Prostate gland (tissue), 2 donors: ENCODE measurements at regions of chr10 and their contacts with region 1.

Region 1: DNA sequence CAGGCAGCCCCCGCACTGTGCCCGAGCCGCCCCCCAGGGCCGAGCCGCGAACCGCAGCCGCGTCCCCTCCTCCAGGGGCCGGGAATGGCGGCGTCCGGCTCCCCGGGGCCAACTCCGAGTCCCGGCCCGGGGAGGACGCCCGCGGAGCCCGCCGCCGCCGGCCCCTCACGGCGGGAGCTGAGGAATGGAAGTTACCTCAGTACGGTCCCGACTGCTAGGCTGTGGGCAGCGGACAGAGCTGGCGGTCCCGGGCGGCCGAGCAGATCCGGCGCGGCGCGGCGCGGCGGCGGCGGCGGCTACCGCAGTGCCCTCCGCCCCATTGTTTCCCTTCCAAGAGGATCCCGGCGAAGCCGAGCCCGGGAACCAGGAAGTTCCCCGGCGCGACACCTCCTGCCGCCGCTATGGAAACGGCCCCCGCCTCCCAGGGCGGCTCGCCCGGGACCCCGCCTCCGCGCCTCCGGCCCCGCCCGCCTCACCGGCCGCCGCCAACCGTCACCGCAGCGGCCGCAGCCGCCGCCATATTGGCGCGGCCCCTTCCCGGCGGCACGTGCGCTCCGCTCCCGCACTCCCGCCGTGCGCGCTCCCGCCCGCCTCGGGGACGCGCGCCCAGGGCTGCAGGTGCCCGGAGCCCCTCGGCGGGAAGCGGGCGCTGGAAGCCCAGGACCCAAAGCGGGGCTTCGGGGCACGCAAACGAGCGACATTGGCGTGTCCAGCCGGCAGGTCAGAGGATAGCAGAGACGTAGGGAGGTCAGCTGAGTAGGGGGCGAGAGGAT is at the start of gene USP6NL:
- DNase-seq: peak; percentile 93
- H3K4me3 ChIP-seq: peak within 1 kb of the TSS; percentile 94 to 95
- H3K27ac ChIP-seq: peak within 1 kb of the TSS; percentile 83 to 90
- H3K4me1 ChIP-seq: no peaks in the 10 kb centered on the region
- H3K27me3 ChIP-seq: no peaks in the 10 kb centered on the region
- CTCF ChIP-seq: no peak
- POLR2A ChIP-seq: peak; percentile 90
- total RNA-seq, gene USP6NL: 13.9 to 28.4 TPM

Region 2: DNA sequence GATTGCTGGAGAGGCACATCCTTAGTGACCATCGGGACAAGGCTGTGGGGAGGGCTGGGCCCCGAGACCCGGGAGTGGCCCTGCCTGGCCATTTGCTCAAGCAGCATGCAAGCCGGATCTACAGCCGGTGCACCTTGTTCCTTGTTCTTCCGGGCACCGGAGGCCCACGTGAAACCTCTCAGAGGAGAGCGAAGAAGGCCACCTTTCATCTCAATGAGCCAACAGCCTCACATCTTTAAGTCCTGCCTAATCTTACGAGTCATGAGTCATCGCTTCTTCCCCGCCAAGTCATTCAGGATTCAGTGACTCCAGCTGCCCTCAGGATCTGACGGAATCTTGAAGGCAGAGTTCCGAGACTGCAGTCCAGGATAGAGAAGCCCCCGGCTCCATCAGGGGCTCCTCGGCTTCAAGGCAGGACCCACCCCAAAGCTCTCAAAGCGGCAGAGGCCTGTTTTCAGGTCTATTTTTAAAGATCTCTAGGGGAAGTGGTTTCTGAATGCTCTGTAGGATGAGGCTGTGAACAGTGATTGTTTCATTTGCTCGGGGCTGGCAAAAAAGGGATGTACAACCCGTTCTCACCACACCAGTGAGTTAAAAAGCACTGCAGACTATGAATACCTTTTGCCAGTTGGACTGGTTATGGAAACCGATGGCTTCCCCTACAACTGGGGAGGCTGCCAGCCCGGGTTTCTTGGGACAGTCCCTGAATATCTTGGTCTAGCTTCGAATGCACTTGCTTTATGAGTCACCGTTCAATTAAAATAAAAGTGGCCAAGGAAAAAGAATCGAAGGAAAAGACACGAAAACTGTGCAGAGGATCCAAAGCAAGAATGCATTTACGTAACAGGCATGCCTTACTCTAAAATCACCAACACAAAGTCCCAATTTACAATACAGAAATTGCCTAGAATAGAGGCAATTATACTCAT is 73.5 kb after region 1 on chr10:
- intact Hi-C with region 1: loop called (anchors 5 kb)
- DNase-seq: peak; percentile 88
- H3K4me3 ChIP-seq: no peak overlapping the region
- H3K27ac ChIP-seq: peak overlapping the region; percentile 71 to 74
- H3K4me1 ChIP-seq: peaks cover 7% of the 10 kb centered on the region
- H3K27me3 ChIP-seq: no peaks in the 10 kb centered on the region
- CTCF ChIP-seq: no peak
- POLR2A ChIP-seq: no peak

Region 3: GRCh38 chr10:11698691-11699549 is 87.5 kb after region 1 on chr10:
- intact Hi-C with region 1: no loop called
- DNase-seq: no peak
- H3K4me3 ChIP-seq: no peak overlapping the region
- H3K27ac ChIP-seq: no peak overlapping the region
- H3K4me1 ChIP-seq: no peaks in the 10 kb centered on the region
- H3K27me3 ChIP-seq: no peaks in the 10 kb centered on the region
- CTCF ChIP-seq: no peak
- POLR2A ChIP-seq: no peak